ENCODE measurements at regions of chr11 and their contacts with region 1.

Region 1: DNA sequence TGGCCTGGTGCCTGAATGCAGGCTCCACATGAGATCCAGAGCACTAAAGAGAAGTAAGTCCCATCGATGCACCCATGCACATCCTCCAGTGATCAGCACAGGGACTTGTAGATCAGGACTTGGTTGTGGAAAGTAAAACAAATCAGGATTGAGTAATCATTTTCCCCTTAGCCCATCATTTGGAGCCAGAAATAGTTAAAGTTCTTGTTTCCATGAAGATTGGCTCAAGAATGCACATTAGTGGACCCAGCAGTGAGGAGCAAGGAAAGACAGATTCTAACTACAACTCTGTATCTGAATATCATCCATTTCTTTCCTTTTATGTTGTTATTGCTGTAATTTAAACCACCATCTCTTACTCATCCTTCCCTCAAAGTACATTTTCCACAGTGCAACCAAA is 19.1 kb downstream of the CCDC83 start:
- DNase-seq: no peak
- ATAC-seq: no peak
- H3K4me3 ChIP-seq: no peak overlapping the region
- H3K4me3 Mint-ChIP-seq: no peak overlapping the region
- H3K27ac ChIP-seq: no peak overlapping the region
- H3K27ac Mint-ChIP-seq: no peak overlapping the region
- H3K4me1 ChIP-seq: no peaks in the 10 kb centered on the region
- H3K4me1 Mint-ChIP-seq: no peaks in the 10 kb centered on the region
- H3K27me3 ChIP-seq: no peaks in the 10 kb centered on the region
- H3K27me3 Mint-ChIP-seq: no peaks in the 10 kb centered on the region
- CTCF ChIP-seq: no peak

Region 2: DNA sequence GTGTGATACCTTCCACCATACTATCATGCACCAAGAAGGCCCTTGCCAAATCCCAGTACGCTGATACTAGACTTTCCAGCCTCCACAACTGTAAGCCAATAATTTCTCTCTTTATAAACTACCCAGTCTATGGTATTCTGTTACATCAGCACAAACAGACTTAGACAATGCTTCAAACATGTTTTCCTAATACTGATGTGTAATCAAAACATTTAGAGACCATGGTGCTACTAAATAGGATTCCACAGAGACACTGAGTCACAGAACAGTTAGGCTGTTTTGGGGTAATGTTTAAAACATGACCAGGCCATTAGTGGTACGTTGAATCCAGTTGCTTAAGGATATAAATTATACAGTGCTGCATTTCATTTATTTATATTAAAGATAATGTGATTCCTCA is 90.9 kb after region 1 on chr11:
- CTCF ChIA-PET with region 1: no interaction called
- POLR2A ChIA-PET with region 1: no interaction called
- intact Hi-C with region 1: loop called in 1 of 2 experiments (anchors 5 kb)
- DNase-seq: no peak
- ATAC-seq: no peak
- H3K4me3 ChIP-seq: no peak overlapping the region
- H3K4me3 Mint-ChIP-seq: no peak overlapping the region
- H3K27ac ChIP-seq: no peak overlapping the region
- H3K27ac Mint-ChIP-seq: peak overlapping the region; percentile 46
- H3K4me1 ChIP-seq: no peaks in the 10 kb centered on the region
- H3K4me1 Mint-ChIP-seq: peaks cover 13% of the 10 kb centered on the region
- H3K27me3 ChIP-seq: no peaks in the 10 kb centered on the region
- H3K27me3 Mint-ChIP-seq: no peaks in the 10 kb centered on the region
- CTCF ChIP-seq: no peak

Measured in CD8-positive, alpha-beta T cell (primary cell).